Thyroid gland (tissue), 4 donors: ENCODE measurements at regions of chr2 and their contacts with region 1.

Region 1: DNA sequence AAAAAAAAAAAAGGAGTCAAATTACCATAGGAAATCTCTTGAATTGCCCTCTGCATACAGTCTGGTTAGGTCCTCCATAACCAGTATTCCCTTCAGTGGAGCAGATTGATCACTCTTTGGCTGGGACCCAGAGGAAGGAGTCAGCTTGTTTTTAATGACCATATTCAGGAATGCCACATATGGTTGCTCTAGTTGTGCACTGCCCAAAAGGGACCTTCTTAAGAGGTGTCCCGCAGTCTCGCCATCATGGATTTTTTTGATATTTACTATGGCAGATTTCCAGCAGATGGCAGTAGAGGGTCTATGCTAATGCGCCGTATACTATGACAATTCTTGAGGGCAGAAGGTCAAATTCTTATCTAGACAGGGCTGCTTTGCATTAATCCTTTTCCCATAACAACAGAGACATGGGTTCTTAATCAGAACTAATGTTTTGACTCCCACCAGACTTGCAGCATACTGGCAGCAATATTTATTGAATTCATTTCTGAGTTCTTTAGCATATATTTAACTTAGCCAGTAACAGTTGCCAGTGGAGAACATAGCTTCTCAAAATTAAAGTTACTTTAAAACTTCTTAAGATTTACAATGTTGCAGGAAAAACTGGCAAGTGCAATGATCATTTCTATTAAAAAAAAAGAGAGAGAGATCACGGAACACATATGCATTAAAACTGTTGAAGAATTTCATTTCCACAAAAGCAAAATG is 31.8 kb upstream of the INPP4A start:
- DNase-seq: peak; percentile 13 to 14
- H3K4me3 ChIP-seq: no peak overlapping the region
- H3K27ac ChIP-seq: no peak overlapping the region
- H3K4me1 ChIP-seq: no peaks in the 10 kb centered on the region
- H3K27me3 ChIP-seq: no peaks in the 10 kb centered on the region
- CTCF ChIP-seq: peak in 4 of 6 experiments; percentile 48 to 62 (median 52)
- POLR2A ChIP-seq: no peak

Region 2: DNA sequence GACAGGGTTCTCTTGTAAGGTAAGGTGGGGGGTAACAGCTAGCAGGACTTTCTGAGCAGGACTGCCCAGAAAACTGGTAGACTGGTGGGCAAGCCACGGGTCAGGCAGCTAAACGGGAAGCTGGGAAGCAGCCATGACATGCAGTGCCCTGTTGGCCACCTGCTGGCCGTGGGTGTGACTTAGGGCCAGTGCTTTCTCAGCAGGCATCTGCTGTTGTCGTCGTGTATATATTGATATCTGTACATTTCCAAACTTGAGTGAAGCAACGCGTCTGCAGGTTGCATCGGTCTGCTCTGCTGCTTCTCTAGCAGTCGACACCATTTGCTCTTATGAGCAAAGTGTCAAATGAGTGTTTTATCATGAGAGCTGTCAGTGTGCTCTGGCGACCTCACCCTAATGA is 164.4 kb after region 1 on chr2:
- intact Hi-C with region 1: loop called (anchors 10 kb)
- DNase-seq: no peak
- H3K4me3 ChIP-seq: no peak overlapping the region
- H3K27ac ChIP-seq: no peak overlapping the region
- H3K4me1 ChIP-seq: no peaks in the 10 kb centered on the region
- H3K27me3 ChIP-seq: no peaks in the 10 kb centered on the region
- CTCF ChIP-seq: no peak
- POLR2A ChIP-seq: no peak